ENCODE measurements at regions of chr14 and their contacts with region 1.

Region 1: DNA sequence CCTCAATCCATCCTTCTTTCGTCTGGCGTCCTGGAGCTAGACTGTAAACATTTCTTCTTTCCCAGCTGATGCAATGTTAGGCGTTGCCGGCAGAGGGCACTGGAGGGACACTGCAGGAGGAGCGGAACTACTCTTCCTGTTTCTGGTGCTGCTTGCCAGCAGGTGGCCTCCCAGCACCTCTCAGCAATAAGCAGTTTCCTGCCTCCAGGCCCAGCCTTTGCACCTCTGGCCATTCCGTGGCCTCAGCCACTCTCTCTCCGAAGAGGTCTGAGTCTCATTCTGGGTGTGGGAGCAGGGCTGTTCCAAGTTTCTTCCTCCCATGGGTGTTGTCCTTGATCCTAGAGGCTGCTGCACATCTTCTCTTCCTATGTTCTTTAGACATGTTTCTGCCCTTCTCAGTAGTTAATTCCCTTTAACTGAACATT is 7.5 kb upstream of the ASPG start:
- ATAC-seq: peak; percentile 98 to 100 (median 99)
- H3K4me3 ChIP-seq: no peak overlapping the region
- H3K27ac ChIP-seq: no peak overlapping the region
- H3K4me1 ChIP-seq: no peaks in the 10 kb centered on the region

Region 2: GRCh38 chr14:103715052-103716000 is 362.7 kb before region 1 on chr14 and contains the starts of genes XRCC3 and ZFYVE21:
- in situ Hi-C with region 1: no loop called
- ATAC-seq: peak; percentile 85 to 92 (median 90)
- H3K4me3 ChIP-seq: peak within 1 kb of the TSS; percentile 59 to 92 (median 68)
- H3K27ac ChIP-seq: peak within 1 kb of the TSS; percentile 60 to 71
- H3K4me1 ChIP-seq: peaks cover 30 to 35% of the 10 kb centered on the region in 2 donors
- total RNA-seq, gene XRCC3: 5.5 to 31.2 (median 7.5) TPM
- total RNA-seq, gene ZFYVE21: 18.3 to 41.8 (median 29.6) TPM

Region 3: DNA sequence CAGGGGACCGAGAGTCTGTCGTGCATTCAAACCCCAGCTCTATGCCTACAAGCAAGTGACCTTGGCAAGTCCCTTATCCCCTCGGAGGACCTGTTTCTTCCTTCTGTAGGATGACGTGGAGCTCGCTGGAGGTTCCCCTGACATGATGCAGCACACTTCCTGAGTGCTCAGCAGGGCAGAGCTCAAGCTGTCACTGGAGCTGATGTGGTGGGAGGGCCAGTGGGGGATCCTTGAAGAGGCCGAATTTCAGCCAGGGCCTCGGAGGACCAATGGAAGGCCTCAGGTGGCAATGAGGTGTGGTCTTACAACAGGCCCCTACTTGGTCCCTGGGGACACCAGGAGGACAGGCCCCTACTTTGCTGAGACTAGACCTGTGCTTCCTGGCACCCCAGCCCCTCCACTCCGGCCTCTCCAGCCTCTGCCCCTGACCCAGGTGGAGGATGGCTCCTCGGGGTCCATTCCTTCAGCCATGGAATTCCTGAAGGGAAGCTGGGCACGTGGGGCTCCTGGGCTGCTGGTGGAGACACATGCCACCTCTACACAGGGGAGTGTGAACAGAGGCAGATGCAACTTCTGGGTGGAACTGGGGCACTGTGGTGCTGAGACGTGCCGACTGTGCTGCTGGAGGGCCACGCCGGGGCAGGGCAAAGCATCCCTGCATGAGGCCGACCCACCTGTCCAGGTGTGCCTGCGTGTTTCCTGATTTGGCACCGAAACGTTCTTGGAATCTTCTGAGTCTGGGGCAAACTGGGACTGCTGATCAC is 41.6 kb after region 1 on chr14:
- in situ Hi-C with region 1: loop called in 1 of 9 experiments (anchors 10 kb)
- ATAC-seq: peak in 5 of 8 experiments; percentile 16 to 61 (median 59)
- H3K4me3 ChIP-seq: no peak overlapping the region
- H3K27ac ChIP-seq: no peak overlapping the region
- H3K4me1 ChIP-seq: peaks cover 4% of the 10 kb centered on the region in 2 donors

Region 4: DNA sequence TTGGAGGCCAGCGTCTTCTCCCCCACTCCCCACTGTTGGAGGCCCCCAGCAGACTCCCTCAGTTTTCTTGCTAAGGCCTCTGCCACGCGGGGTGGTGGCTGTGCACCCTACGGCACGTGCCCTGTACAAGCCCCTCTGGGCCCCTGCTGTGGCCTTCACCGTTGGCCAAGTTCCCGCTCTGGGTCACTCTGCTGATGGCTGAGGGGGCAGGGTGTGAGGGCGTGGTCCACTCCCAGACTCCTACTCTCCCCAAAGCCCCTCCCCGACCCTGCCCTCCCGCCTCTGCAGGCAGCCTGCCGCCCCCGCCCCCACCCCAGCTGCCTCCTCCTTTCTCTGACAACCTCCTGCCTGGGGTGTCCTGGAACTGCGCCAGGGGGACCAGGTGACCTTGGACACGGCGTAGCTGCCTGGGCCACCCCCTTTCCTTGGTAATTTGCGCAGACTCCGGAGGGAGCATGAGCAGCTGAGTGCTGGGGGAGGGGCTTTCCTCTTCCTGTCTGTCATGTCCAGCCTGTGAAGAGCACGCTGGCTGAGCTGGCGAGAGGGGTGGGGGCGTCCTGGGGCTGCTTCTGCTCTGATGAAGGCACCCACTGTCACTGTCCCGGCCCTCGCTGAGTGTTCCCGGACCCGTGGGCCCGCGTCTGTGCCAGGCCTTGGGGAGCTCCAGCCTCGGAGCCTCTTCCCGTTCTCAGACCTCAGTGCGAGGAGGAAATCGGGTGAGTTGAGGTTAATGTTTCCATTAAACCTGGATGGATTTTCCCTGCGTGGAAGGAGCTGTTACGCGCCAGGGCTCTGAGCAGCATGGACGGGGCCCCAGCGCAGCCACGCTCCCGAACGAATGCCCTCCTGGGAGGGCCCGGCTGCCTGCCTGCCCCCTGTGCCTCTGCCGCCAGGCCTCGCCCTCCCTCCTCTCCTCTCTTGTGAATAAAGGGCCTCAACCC is 145.3 kb after region 1 on chr14:
- in situ Hi-C with region 1: no loop called
- ATAC-seq: peak in 5 of 8 experiments; percentile 87 to 91 (median 90)
- H3K4me3 ChIP-seq: peak overlapping the region in 2 of 5 donors; percentile 2 to 21
- H3K27ac ChIP-seq: peak overlapping the region; percentile 63 to 77
- H3K4me1 ChIP-seq: peaks cover 64 to 66% of the 10 kb centered on the region in 2 donors